ENCODE measurements at regions of chr21 and their contacts with region 1.

Region 1: GRCh38 chr21:33185852-33186251 is 43.9 kb upstream of the IFNAR2 start:
- DNase-seq: no peak
- ATAC-seq: no peak
- H3K4me3 ChIP-seq: no peak overlapping the region
- H3K27ac ChIP-seq: no peak overlapping the region
- H3K4me1 ChIP-seq: no peaks in the 10 kb centered on the region
- H3K27me3 ChIP-seq: no peaks in the 10 kb centered on the region

Region 2: GRCh38 chr21:32844653-32845436 is 341.0 kb before region 1 on chr21:
- intact Hi-C with region 1: loop called in 1 of 4 experiments (anchors 10 kb)
- DNase-seq: no peak
- ATAC-seq: no peak
- H3K4me3 ChIP-seq: no peak overlapping the region
- H3K27ac ChIP-seq: no peak overlapping the region
- H3K4me1 ChIP-seq: no peaks in the 10 kb centered on the region
- H3K27me3 ChIP-seq: peaks cover 3% of the 10 kb centered on the region

Region 3: GRCh38 chr21:32958288-32959002 is 227.4 kb before region 1 on chr21:
- intact Hi-C with region 1: loop called in 1 of 4 experiments (anchors 10 kb)
- DNase-seq: no peak
- ATAC-seq: no peak
- H3K4me3 ChIP-seq: no peak overlapping the region
- H3K27ac ChIP-seq: no peak overlapping the region
- H3K4me1 ChIP-seq: peaks cover 3% of the 10 kb centered on the region
- H3K27me3 ChIP-seq: no peaks in the 10 kb centered on the region

Measured in right cardiac atrium (tissue), 5 donors.